WTC11 (cell line): ENCODE measurements at regions of chr6 and their contacts with region 1.

Region 1: DNA sequence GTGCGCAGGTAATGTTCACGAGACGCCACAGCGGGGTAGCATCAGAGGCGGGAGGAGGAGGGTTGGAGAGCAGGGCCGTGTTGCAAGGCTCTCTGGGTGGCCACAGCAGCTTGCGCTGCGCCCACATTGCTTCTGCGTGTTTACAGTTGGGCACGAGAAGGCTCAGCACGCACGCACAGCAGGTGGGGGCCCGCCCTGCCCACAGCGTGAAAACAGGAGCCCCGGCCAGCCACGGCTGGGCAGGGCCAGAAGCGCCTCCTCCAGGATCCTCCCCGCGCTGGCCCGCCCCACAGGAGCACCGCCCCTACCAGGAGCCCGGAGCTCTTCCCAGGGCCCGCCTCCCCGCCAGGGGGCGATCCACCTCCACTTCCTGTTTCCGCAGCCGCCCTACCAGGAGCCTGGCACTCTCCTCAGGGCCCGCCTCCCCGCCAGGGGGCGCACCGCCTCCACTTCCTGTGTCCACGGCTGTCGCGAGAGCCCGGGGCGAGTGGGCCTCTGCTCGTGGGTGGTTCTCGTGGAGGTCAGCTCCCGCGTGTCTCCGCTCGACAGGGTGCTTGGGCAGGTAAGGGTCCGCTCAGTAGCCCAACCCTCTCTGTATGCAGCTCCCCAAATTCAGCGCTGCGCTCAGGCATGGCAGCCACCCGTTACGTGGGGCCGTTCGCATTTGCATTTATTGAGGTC is at the start of gene FAM50B:
- DNase-seq: peak; percentile 98
- ATAC-seq: peak; percentile 98
- H3K4me3 Mint-ChIP-seq: peak within 1 kb of the TSS; percentile 80
- H3K27ac Mint-ChIP-seq: no peak within 1 kb of the TSS
- H3K4me1 Mint-ChIP-seq: peaks cover 9% of the 10 kb centered on the region
- H3K27me3 Mint-ChIP-seq: peaks cover 6% of the 10 kb centered on the region
- CTCF ChIP-seq: peak; percentile 100
- total RNA-seq, gene FAM50B: 2.1 to 3.6 TPM (median 3.3 TPM) in 3 replicates

Region 2: GRCh38 chr6:3659748-3660147 is 189.3 kb before region 1 on chr6:
- CTCF ChIA-PET with region 1: no interaction called
- POLR2A ChIA-PET with region 1: no interaction called
- DNase-seq: no peak
- ATAC-seq: no peak
- H3K4me3 Mint-ChIP-seq: no peak overlapping the region
- H3K27ac Mint-ChIP-seq: no peak overlapping the region
- H3K4me1 Mint-ChIP-seq: peaks cover 9% of the 10 kb centered on the region
- H3K27me3 Mint-ChIP-seq: peaks cover 7% of the 10 kb centered on the region
- CTCF ChIP-seq: no peak

Region 3: GRCh38 chr6:3742426-3743344 is 106.4 kb before region 1 on chr6:
- CTCF ChIA-PET with region 1: interaction called, 60 read pairs
- POLR2A ChIA-PET with region 1: no interaction called
- DNase-seq: peak; percentile 93
- ATAC-seq: peak; percentile 74
- H3K4me3 Mint-ChIP-seq: no peak overlapping the region; the same call in 1 of the 2 replicates
- H3K27ac Mint-ChIP-seq: no peak overlapping the region
- H3K4me1 Mint-ChIP-seq: peaks cover 41% of the 10 kb centered on the region
- H3K27me3 Mint-ChIP-seq: peaks cover 11% of the 10 kb centered on the region
- CTCF ChIP-seq: peak; percentile 95

Region 4: GRCh38 chr6:3813150-3813780 is 35.8 kb before region 1 on chr6:
- CTCF ChIA-PET with region 1: interaction called, 13 read pairs
- POLR2A ChIA-PET with region 1: interaction called, 3 read pairs
- DNase-seq: no peak
- ATAC-seq: no peak; the same call in 1 of the 2 replicates
- H3K4me3 Mint-ChIP-seq: no peak overlapping the region
- H3K27ac Mint-ChIP-seq: no peak overlapping the region
- H3K4me1 Mint-ChIP-seq: peaks cover 21% of the 10 kb centered on the region
- H3K27me3 Mint-ChIP-seq: no peaks in the 10 kb centered on the region
- CTCF ChIP-seq: no peak

Region 5: GRCh38 chr6:3868544-3868943 is 19.5 kb after region 1 on chr6:
- CTCF ChIA-PET with region 1: interaction called, 39 read pairs
- POLR2A ChIA-PET with region 1: no interaction called
- DNase-seq: no peak
- ATAC-seq: peak; percentile 36
- H3K4me3 Mint-ChIP-seq: no peak overlapping the region
- H3K27ac Mint-ChIP-seq: no peak overlapping the region
- H3K4me1 Mint-ChIP-seq: peaks cover 11% of the 10 kb centered on the region
- H3K27me3 Mint-ChIP-seq: no peaks in the 10 kb centered on the region
- CTCF ChIP-seq: no peak

Region 6: DNA sequence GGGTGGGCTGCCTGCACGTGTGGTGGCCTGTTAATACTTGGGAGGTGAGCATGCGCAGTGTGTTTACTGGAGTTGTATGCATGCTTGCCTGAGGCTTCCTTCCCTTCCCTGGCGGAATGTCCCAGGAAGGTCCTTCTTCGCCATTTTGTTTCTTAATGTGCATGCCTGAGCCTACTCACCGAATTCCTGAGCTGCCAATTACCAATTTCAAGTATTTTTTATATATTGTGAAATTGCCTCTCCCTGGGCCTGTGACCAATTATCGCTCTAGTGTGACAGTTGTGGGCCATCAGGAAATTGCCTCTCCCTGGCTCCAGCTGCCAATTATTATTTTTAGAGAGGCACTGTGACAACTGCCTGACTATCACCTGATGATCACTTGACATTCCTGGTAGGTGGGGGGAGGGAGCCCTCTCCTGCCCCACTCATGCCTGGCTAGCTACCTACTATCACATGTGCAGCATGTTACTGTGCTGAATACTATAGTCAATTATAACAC is 70.1 kb after region 1 on chr6:
- CTCF ChIA-PET with region 1: interaction called, 34 read pairs
- POLR2A ChIA-PET with region 1: no interaction called
- DNase-seq: no peak
- ATAC-seq: no peak
- H3K4me3 Mint-ChIP-seq: no peak overlapping the region
- H3K27ac Mint-ChIP-seq: peak overlapping the region; percentile 23; the same call in 1 of the 2 replicates
- H3K4me1 Mint-ChIP-seq: peaks cover 33% of the 10 kb centered on the region
- H3K27me3 Mint-ChIP-seq: peaks cover 6% of the 10 kb centered on the region
- CTCF ChIP-seq: no peak

Region 7: GRCh38 chr6:3977875-3978711 is 129.0 kb after region 1 on chr6:
- CTCF ChIA-PET with region 1: interaction called, 150 read pairs
- POLR2A ChIA-PET with region 1: no interaction called
- DNase-seq: peak; percentile 33
- ATAC-seq: peak; percentile 99
- H3K4me3 Mint-ChIP-seq: no peak overlapping the region
- H3K27ac Mint-ChIP-seq: no peak overlapping the region
- H3K4me1 Mint-ChIP-seq: peaks cover 17% of the 10 kb centered on the region
- H3K27me3 Mint-ChIP-seq: no peaks in the 10 kb centered on the region
- CTCF ChIP-seq: peak; percentile 38

Region 8: DNA sequence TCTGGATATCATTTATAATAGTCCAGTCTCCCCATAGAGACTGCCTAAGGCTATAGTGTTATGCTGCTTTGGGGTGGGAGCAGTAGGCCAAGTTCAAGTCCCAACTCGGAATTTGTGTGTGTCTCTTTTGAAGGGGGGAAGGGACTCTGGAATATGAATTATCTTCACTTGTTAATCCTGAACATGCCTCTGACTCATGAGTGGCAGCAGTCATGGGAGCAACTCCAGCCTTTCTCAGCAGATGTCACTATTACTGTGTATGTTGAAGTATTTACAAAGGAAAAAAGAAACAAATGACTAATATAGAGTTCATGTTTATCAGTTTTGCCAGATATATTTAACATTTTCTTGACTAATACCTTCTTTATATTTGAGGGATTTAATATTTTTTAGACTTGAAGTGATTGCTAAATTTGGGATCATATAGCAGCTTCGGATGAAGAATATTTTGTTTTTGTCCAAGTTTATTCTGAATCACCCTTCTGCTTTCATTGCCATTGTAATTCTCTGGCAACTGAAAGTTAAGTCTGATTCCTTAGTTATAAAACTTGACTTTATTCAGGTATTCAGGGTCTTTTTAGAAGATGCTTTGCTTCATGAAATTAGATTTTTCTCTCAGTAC is 206.5 kb after region 1 on chr6:
- CTCF ChIA-PET with region 1: no interaction called
- POLR2A ChIA-PET with region 1: no interaction called
- DNase-seq: no peak
- ATAC-seq: no peak
- H3K4me3 Mint-ChIP-seq: no peak overlapping the region
- H3K27ac Mint-ChIP-seq: no peak overlapping the region
- H3K4me1 Mint-ChIP-seq: peaks cover 3% of the 10 kb centered on the region; the same call in 1 of the 2 replicates
- H3K27me3 Mint-ChIP-seq: no peaks in the 10 kb centered on the region
- CTCF ChIP-seq: no peak